GM23248 (cell line): ENCODE measurements at regions of chr15 and their contacts with region 1.

Region 1: GRCh38 chr15:92077353-92078085 is 224.0 kb downstream of the SLCO3A1 start:
- DNase-seq: peak; percentile 85
- H3K4me3 ChIP-seq: no peak overlapping the region
- H3K27ac ChIP-seq: no peak overlapping the region
- H3K4me1 ChIP-seq: 0 out of 2 replicates have a peak, but pooled peaks cover 4% of the 10 kb centered on the region
- H3K27me3 ChIP-seq: no peaks in the 10 kb centered on the region

Region 2: GRCh38 chr15:91302588-91303439 is 774.7 kb before region 1 on chr15:
- in situ Hi-C with region 1: loop called (anchors 10 kb)
- DNase-seq: peak; percentile 76
- H3K4me3 ChIP-seq: no peak overlapping the region
- H3K27ac ChIP-seq: no peak overlapping the region
- H3K4me1 ChIP-seq: no peaks in the 10 kb centered on the region
- H3K27me3 ChIP-seq: peaks cover 62% of the 10 kb centered on the region

Region 3: DNA sequence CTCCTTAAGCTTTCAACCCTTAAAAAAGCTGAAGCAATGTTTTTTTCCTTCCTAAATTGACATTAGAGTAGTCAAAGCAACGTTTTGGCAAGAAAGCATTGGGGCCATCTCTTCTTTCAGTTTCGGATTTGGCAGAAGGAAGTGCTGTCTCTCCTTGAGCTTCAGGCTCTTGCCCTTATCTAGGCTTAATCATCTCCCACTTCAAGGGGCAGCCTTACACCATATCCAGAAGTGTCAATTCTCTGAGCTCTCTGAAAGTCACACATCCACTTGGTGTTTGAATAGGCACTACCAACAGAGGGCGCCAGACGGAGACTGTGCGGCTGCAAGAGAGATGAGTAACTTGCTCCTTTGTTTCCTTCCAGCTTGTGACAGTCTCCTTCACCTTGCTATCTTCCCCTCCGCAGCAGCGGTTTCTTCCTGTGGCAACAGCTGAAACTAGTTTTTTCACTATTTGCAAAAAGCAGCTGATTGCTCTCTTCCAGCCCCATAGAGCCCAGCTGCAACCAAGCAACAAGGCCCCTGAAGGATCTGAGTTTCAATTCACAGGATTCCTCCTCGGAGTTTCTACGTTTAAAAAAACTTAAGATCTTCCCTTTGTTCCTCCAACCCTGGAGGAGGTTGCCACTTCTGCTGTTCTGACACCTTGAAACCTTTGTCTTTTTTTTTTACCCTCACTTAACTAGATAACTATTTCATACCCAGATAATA is 371.0 kb before region 1 on chr15:
- in situ Hi-C with region 1: loop called (anchors 25 kb)
- DNase-seq: peak; percentile 77
- H3K4me3 ChIP-seq: no peak overlapping the region
- H3K27ac ChIP-seq: no peak overlapping the region
- H3K4me1 ChIP-seq: no peaks in the 10 kb centered on the region
- H3K27me3 ChIP-seq: no peaks in the 10 kb centered on the region

Region 4: GRCh38 chr15:91849749-91850161 is 227.8 kb before region 1 on chr15:
- in situ Hi-C with region 1: loop called (anchors 10 kb)
- DNase-seq: peak; percentile 73
- H3K4me3 ChIP-seq: no peak overlapping the region
- H3K27ac ChIP-seq: no peak overlapping the region
- H3K4me1 ChIP-seq: peaks cover 5% of the 10 kb centered on the region; the same call in 1 of the 2 replicates
- H3K27me3 ChIP-seq: peaks cover 5% of the 10 kb centered on the region

Region 5: GRCh38 chr15:91867581-91868026 is 209.9 kb before region 1 on chr15:
- in situ Hi-C with region 1: loop called (anchors 10 kb)
- DNase-seq: peak; percentile 97
- H3K4me3 ChIP-seq: peak overlapping the region; percentile 47
- H3K27ac ChIP-seq: peak overlapping the region; percentile 92
- H3K4me1 ChIP-seq: peaks cover 30% of the 10 kb centered on the region
- H3K27me3 ChIP-seq: no peaks in the 10 kb centered on the region

Region 6: GRCh38 chr15:92288755-92289154 is 211.2 kb after region 1 on chr15:
- in situ Hi-C with region 1: no loop called
- DNase-seq: no peak
- H3K4me3 ChIP-seq: no peak overlapping the region
- H3K27ac ChIP-seq: no peak overlapping the region
- H3K4me1 ChIP-seq: no peaks in the 10 kb centered on the region
- H3K27me3 ChIP-seq: no peaks in the 10 kb centered on the region

Region 7: DNA sequence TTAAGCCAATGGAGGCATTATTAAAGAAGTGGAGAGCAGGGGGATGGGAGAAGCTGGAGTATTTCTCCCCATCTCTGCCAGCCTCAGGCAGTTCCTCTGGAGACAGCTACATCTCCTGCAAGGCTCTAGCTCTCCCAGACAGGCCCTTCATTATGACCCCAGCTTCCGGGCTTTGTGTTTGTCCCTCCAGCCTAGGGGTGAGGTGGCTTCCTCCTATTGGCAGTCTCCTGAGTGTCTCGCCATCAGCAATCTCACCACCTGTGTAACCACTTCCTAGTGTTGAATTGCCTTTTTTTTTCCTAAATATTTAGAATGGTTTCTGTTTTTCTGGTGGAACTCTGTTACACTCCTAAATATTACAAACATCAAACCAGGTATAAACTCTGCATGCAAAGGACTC is 455.8 kb after region 1 on chr15:
- in situ Hi-C with region 1: no loop called
- DNase-seq: no peak
- H3K4me3 ChIP-seq: no peak overlapping the region
- H3K27ac ChIP-seq: no peak overlapping the region
- H3K4me1 ChIP-seq: no peaks in the 10 kb centered on the region
- H3K27me3 ChIP-seq: no peaks in the 10 kb centered on the region; the same call in none of the 2 replicates